ENCODE measurements at regions of chr18 and their contacts with region 1.

Region 1: DNA sequence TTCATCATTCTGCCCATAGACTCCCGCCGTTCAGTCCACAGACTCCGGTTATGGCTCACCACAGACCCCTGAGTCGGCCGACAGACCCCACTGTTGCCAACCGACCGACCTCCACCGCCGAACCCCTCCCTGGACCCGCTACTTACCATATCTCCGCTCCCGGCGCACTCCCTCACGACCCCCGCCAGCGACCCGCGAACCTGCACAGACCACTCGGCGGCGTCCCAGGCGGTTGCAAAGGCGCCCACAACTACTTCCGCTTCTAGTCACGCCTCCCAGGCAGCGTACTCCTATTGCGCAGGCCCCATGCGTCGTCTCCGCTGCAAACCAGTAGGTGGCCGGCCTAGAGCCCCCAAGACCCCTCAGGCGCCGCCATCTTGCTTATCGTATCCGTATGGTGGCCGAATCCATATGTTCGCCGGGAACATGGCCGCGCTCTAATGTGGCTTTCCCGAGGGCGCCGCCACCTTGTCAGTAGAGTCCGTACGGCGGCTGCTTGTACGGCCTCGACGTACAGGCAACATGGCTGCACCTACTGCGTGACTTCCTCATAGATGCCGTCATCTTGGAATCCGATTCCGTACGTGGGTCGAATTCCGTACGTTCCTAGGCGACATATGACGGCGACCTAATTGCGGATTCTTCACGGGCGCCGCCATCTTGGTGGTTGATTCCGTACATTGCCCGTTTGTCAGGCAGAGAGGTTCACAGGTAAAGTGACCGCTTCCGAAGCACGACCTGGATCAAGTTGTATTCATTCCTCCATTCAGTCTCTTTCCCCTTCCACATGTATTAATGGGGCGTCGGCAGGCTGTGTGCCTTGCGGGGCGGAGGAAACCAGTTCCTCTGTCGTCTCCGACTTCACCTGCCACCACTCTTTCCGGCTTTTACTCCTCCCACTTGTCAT is at the start of gene CXXC1:
- DNase-seq: peak; percentile 97 to 98
- H3K4me3 ChIP-seq: peak within 1 kb of the TSS; percentile 61 to 92 (median 87)
- H3K27ac ChIP-seq: peak within 1 kb of the TSS; percentile 85 to 94 (median 86)
- H3K4me1 ChIP-seq: no peaks in the 10 kb centered on the region
- H3K27me3 ChIP-seq: no peaks in the 10 kb centered on the region
- CTCF ChIP-seq: peak in 5 of 6 experiments; percentile 22 to 72 (median 49)
- POLR2A ChIP-seq: peak in 1 of 2 donors; percentile 48
- total RNA-seq, gene CXXC1: 39.7 to 125 (median 62.7) TPM

Region 2: GRCh38 chr18:50356036-50356945 is 68.6 kb after region 1 on chr18:
- intact Hi-C with region 1: loop called (anchors 10 kb)
- DNase-seq: no peak
- H3K4me3 ChIP-seq: no peak overlapping the region
- H3K27ac ChIP-seq: no peak overlapping the region
- H3K4me1 ChIP-seq: no peaks in the 10 kb centered on the region
- H3K27me3 ChIP-seq: no peaks in the 10 kb centered on the region
- CTCF ChIP-seq: no peak
- POLR2A ChIP-seq: no peak

Measured in thyroid gland (tissue), 4 donors.